ENCODE measurements at regions of chr3 and their contacts with region 1.

Region 1: GRCh38 chr3:177150970-177151627 is 46.2 kb downstream of the TBL1XR1 start:
- DNase-seq: peak; percentile 24
- H3K4me3 Mint-ChIP-seq: peak overlapping the region; percentile 28
- H3K27ac Mint-ChIP-seq: peak overlapping the region; percentile 44
- H3K4me1 Mint-ChIP-seq: peaks cover 50% of the 10 kb centered on the region
- H3K27me3 Mint-ChIP-seq: no peaks in the 10 kb centered on the region

Region 2: GRCh38 chr3:177185035-177185574 is 34.0 kb after region 1 on chr3:
- CTCF ChIA-PET with region 1: interaction called, 3 read pairs
- POLR2A ChIA-PET with region 1: no interaction called
- intact Hi-C with region 1: loop called (anchors 1 kb)
- DNase-seq: no peak
- H3K4me3 Mint-ChIP-seq: no peak overlapping the region
- H3K27ac Mint-ChIP-seq: peak overlapping the region; percentile 35
- H3K4me1 Mint-ChIP-seq: peaks cover 62% of the 10 kb centered on the region
- H3K27me3 Mint-ChIP-seq: no peaks in the 10 kb centered on the region